ENCODE measurements at regions of chr19 and their contacts with region 1.

Region 1: DNA sequence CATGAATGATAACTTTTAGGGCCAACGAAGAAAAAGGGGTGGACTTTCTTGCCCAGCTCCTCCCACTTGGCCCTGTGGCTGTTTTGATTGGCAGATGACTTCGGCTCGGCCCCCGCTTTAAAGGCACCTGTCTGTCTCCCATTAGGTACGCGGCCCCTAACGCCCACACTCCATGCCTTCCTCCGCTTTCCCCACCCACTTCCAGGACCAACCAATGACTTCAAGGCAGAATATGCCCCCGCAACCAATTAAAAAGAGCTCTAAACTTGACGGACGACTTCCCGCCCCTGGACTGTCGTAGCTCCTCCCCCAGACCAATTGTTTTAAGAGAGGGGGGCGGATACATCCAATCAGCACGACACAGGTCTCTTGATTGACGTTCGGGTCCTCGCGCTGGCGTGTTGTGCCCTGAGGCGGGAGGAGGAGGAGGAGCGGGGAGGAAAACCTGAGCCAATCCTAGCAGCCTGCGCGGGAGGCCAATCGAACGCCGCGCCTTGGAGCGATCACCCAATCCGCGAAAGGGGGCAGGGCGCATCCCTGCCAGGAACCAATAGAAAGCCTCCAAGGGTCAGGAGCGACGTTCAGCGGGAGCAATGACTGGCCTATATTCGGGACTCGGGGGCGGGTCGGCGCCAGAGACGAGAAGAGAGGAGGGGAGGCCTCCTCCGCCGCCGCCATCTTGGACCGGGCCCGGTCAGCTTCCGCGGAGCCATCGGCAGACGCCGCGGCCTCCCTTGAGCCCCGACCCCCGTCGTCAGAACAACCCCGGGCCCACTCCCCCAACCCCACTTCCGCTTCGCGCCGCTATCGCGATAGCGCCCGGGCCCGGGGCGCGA is at the start of gene CNOT3:
- DNase-seq: peak; percentile 99
- H3K4me3 Mint-ChIP-seq: peak within 1 kb of the TSS; percentile 93
- H3K27ac Mint-ChIP-seq: peak within 1 kb of the TSS; percentile 92
- H3K4me1 Mint-ChIP-seq: peaks cover 42% of the 10 kb centered on the region
- H3K27me3 Mint-ChIP-seq: no peaks in the 10 kb centered on the region
- total RNA-seq, gene CNOT3: 70.0 and 73.2 TPM in 2 replicates

Region 2: GRCh38 chr19:53431399-53432087 is 705.8 kb before region 1 on chr19 and contains the start of gene ZNF761:
- intact Hi-C with region 1: loop called (anchors 2 kb)
- DNase-seq: peak; percentile 96
- H3K4me3 Mint-ChIP-seq: peak within 1 kb of the TSS; percentile 88
- H3K27ac Mint-ChIP-seq: peak within 1 kb of the TSS; percentile 94
- H3K4me1 Mint-ChIP-seq: peaks cover 25% of the 10 kb centered on the region
- H3K27me3 Mint-ChIP-seq: no peaks in the 10 kb centered on the region
- total RNA-seq, gene ZNF761: 9.9 and 12.3 TPM in 2 replicates

Region 3: GRCh38 chr19:54115109-54116063 is 21.9 kb before region 1 on chr19 and contains the starts of genes PRPF31 and TFPT:
- intact Hi-C with region 1: loop called (anchors 1 kb)
- DNase-seq: peak; percentile 93
- H3K4me3 Mint-ChIP-seq: peak within 1 kb of the TSS; percentile 94
- H3K27ac Mint-ChIP-seq: peak within 1 kb of the TSS; percentile 91
- H3K4me1 Mint-ChIP-seq: peaks cover 32% of the 10 kb centered on the region
- H3K27me3 Mint-ChIP-seq: no peaks in the 10 kb centered on the region
- total RNA-seq, gene PRPF31: 110 and 118 TPM in 2 replicates
- total RNA-seq, gene TFPT: 31.1 and 33.4 TPM in 2 replicates

Region 4: GRCh38 chr19:54203151-54203611 is 65.9 kb after region 1 on chr19:
- intact Hi-C with region 1: loop called (anchors 1 kb)
- DNase-seq: no peak
- H3K4me3 Mint-ChIP-seq: peak overlapping the region; percentile 95
- H3K27ac Mint-ChIP-seq: peak overlapping the region; percentile 99
- H3K4me1 Mint-ChIP-seq: peaks cover 75% of the 10 kb centered on the region
- H3K27me3 Mint-ChIP-seq: no peaks in the 10 kb centered on the region

Region 5: DNA sequence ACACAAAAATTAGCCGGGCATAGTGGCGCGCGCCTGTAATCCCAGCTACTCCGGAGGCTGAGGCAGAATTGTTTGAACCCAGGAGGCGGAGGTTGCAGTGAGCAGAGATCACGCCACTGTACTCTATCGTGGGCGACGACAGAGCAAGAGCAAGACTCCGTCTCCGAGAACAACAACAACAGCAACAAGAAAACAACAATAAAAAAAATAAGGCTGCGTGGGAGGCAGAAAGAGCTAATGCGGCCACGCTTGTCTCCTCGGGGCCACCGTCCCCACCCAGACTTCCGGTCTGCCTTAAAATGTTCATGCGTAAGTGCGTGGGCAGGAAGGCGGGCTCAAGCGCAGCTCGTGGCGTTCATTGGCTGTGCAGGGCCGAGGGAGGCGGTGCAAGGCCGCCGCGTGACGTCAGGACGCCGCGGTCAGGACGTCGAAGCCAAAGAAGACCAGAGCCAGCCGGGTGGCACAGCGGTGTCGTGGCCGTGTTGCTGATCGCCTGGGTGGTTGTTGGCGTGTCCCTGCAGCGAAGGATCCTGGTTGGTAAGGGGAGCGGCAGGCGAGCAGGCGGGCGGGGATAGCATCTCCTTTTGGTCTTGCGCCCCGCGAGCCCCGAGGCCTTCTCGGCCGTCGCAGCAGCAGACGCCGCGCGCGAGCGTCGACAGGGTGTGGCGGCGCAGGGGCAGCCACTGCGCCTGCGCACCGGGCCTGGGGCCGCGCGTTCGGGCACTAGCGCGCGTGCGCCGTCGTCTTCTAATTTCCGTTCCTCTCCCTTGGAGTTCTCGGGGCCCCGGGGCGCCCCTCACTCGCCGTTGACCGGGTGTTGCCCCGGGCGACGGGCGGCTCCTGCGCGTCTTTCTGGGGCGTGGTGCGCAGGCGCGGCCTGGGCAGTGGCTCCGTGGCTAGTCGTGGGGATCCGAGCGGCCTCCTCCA is 311.7 kb after region 1 on chr19 and contains the start of gene LENG8:
- intact Hi-C with region 1: loop called (anchors 1 kb)
- DNase-seq: peak; percentile 96
- H3K4me3 Mint-ChIP-seq: peak within 1 kb of the TSS; percentile 99
- H3K27ac Mint-ChIP-seq: peak within 1 kb of the TSS; percentile 98
- H3K4me1 Mint-ChIP-seq: peaks cover 36% of the 10 kb centered on the region
- H3K27me3 Mint-ChIP-seq: no peaks in the 10 kb centered on the region
- total RNA-seq, gene LENG8: 192 and 193 TPM in 2 replicates

Region 6: DNA sequence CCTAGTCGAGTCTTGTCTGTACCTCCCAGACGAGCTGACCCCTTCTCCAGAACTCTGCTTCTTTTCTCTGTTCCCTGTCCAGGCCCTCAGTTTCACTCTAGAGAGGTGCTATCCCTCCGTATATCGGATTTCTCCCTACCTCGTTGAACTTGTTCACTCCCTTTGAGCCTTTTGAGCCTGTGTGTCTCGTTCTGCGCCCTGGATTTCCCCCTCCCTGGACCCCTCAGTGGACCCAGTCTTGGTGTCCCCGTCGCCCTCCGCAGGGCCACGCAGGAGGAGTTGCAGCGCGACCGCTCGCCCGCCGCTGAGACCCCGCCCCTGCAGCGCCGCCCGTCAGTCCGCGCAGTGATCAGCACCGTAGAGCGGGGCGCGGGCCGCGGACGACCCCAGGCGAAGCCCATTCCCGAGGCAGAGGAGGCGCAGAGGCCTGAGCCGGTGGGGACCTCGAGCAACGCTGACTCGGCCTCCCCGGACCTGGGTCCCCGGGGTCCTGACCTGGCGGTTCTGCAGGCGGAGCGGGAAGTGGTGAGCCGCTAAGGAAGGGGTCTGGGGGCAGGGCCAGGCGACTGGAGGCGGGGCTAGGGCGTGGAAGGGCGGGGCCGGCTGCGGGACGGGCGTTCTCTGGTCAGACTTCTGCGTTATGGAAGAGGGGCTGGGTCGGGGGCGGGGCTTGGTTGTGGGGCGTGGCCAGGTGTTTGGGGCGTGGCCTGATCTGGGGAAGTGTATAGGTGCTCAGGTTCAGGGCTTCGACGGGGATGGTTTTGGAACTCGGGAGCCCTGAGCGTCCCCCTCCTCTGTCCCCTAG is 943.9 kb after region 1 on chr19:
- intact Hi-C with region 1: loop called (anchors 2 kb)
- DNase-seq: peak; percentile 92
- H3K4me3 Mint-ChIP-seq: peak overlapping the region; percentile 88
- H3K27ac Mint-ChIP-seq: peak overlapping the region; percentile 67
- H3K4me1 Mint-ChIP-seq: peaks cover 23% of the 10 kb centered on the region
- H3K27me3 Mint-ChIP-seq: peaks cover 35% of the 10 kb centered on the region

Measured in activated T-helper 1 cell treated with anti-CD3 and anti-CD28 coated beads, Interleukin-12 subunit alpha, Interleukin-12 subunit beta, Interleukin-2, Interleukin-4 antibody, amounts not matched to agents 30 ng/mL and 10 ng/mL and 1 ng/mL, durations not matched to agents 14 hours and 24 hours and 36 hours (primary cell).